Prostate gland (tissue), 2 donors: ENCODE measurements at regions of chr10 and their contacts with region 1.

Region 1: GRCh38 chr10:118106426-118106825 is 59.7 kb upstream of the RAB11FIP2 start:
- DNase-seq: no peak
- H3K4me3 ChIP-seq: no peak overlapping the region
- H3K27ac ChIP-seq: no peak overlapping the region
- H3K4me1 ChIP-seq: no peaks in the 10 kb centered on the region
- H3K27me3 ChIP-seq: no peaks in the 10 kb centered on the region
- CTCF ChIP-seq: peak in 2 of 4 experiments; percentile 15 to 21
- POLR2A ChIP-seq: no peak

Region 2: DNA sequence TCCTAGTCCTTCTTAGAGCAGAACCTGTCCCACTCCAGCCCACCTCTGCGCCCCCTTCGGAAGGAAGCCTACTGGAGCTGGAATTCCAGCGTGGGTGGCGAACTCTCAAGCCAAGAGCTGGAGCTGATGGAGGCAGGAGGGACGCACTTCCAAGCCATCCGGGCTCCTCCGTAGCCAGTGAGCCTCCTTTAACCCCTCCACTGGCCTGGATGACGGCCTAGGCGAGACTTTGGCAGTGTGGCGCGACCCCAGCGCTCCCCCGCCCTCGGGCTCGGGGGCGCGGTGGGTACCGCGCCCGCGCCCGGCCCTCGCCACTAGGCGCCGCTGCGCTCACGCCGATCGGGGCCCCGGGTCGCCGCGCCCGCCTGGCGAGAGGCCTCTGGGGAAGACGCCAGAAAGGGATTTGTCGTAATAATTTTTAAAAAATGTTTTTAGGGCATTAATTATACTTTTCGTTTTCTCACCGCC is 569.0 kb before region 1 on chr10:
- intact Hi-C with region 1: loop called (anchors 5 kb)
- DNase-seq: no peak
- H3K4me3 ChIP-seq: no peak overlapping the region
- H3K27ac ChIP-seq: no peak overlapping the region
- H3K4me1 ChIP-seq: peaks cover 14% of the 10 kb centered on the region
- H3K27me3 ChIP-seq: peaks cover 66% of the 10 kb centered on the region
- CTCF ChIP-seq: peak; percentile 55 to 69 (median 62)
- POLR2A ChIP-seq: no peak

Region 3: GRCh38 chr10:118692872-118693271 is 586.4 kb after region 1 on chr10:
- intact Hi-C with region 1: no loop called
- DNase-seq: no peak
- H3K4me3 ChIP-seq: no peak overlapping the region
- H3K27ac ChIP-seq: no peak overlapping the region
- H3K4me1 ChIP-seq: no peaks in the 10 kb centered on the region
- H3K27me3 ChIP-seq: no peaks in the 10 kb centered on the region
- CTCF ChIP-seq: no peak
- POLR2A ChIP-seq: no peak